MCF 10A (cell line): ENCODE measurements at regions of chr9 and their contacts with region 1.

Region 1: GRCh38 chr9:97598461-97599288 is 34.5 kb downstream of the TSTD2 start:
- DNase-seq: peak; percentile 80
- H3K4me3 Mint-ChIP-seq: no peak overlapping the region
- H3K27ac Mint-ChIP-seq: no peak overlapping the region
- H3K4me1 Mint-ChIP-seq: peaks cover 9% of the 10 kb centered on the region
- H3K27me3 Mint-ChIP-seq: no peaks in the 10 kb centered on the region
- CTCF ChIP-seq: peak; percentile 77

Region 2: DNA sequence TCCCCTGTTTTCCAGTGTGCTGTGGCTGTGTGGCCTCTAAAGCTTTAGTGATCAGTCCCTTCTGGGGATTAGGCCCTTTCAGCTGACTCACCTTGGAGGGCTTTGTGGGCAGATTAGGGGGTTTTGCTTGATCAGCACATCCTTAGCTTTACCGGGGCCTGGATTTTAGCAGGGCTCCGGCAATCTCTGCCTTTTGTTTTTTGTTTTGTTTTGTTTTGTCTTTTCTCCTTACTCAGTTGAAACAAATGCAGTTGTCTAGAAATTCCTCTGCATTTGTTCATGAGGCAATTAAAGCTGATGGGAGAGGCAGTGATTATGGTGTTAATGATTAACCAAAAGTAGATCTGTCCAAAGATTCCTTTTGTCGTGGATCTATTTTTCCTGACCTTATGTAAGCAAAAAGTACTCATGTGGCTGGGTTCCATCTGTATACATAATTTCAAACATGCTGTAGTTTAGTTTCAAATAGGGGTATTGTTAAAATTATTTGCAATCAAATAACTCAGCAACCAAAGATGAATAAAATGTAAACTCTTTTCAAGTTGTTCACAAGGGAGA is 192.0 kb before region 1 on chr9:
- CTCF ChIA-PET with region 1: interaction called, 11 read pairs
- POLR2A ChIA-PET with region 1: interaction called, 3 read pairs
- intact Hi-C with region 1: loop called (anchors 1 kb)
- DNase-seq: no peak
- H3K4me3 Mint-ChIP-seq: no peak overlapping the region
- H3K27ac Mint-ChIP-seq: no peak overlapping the region
- H3K4me1 Mint-ChIP-seq: peaks cover 4% of the 10 kb centered on the region
- H3K27me3 Mint-ChIP-seq: peaks cover 39% of the 10 kb centered on the region
- CTCF ChIP-seq: no peak

Region 3: DNA sequence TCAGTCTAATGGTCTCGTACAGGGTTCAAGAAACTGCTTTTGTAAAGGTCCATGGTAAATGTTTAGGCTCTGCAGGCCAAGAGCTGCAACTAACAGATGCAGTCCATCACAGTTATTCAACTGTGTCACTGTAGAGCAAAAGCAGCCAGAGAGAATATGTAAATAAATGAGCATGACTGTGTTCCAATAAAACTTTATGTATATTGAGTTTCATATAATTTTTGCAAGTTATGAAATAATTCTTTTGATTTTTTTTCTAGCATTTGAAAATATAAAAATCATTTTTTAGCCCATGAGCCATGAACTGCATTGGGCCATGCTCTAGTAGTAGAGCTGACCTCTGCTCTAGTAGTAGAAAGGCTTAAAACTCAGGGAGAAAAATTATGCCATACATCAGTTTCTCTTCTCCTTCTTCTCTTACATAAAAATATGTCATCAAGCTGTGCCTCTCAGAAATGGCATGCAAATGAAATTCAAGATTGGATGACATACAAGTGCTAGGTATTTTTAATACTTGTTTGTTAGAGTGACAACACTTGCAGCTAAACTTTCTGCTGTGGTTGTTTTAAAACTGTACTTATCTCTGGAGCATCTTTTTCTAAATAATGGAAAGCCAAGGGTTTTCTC is 139.5 kb before region 1 on chr9:
- CTCF ChIA-PET with region 1: interaction called, 18 read pairs
- POLR2A ChIA-PET with region 1: interaction called, 3 read pairs
- intact Hi-C with region 1: no loop called
- DNase-seq: no peak
- H3K4me3 Mint-ChIP-seq: no peak overlapping the region
- H3K27ac Mint-ChIP-seq: no peak overlapping the region
- H3K4me1 Mint-ChIP-seq: no peaks in the 10 kb centered on the region
- H3K27me3 Mint-ChIP-seq: no peaks in the 10 kb centered on the region
- CTCF ChIP-seq: no peak

Region 4: DNA sequence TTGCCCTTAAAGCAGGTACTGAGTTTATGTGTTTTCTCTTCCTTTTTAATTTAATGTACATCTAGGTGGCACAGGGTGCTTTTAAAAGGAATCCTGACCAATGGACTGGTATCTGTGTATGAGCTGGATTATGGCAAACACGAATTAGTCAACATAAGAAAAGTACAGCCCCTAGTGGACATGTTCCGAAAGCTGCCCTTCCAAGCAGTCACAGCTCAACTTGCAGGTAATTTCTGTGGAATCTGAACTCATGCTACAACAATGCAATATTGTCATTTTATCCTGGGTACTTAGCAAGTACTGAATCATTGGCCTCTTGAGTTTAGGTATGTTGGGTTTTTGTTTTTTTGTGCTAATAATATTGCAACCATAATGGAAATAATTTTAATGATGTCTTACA is 111.6 kb before region 1 on chr9:
- CTCF ChIA-PET with region 1: interaction called, 11 read pairs
- POLR2A ChIA-PET with region 1: interaction called, 3 read pairs
- intact Hi-C with region 1: no loop called
- DNase-seq: peak; percentile 25
- H3K4me3 Mint-ChIP-seq: no peak overlapping the region
- H3K27ac Mint-ChIP-seq: no peak overlapping the region
- H3K4me1 Mint-ChIP-seq: no peaks in the 10 kb centered on the region
- H3K27me3 Mint-ChIP-seq: no peaks in the 10 kb centered on the region
- CTCF ChIP-seq: peak; percentile 16

Region 5: GRCh38 chr9:97570899-97571298 is 27.8 kb before region 1 on chr9:
- CTCF ChIA-PET with region 1: interaction called, 26 read pairs
- POLR2A ChIA-PET with region 1: no interaction called
- intact Hi-C with region 1: no loop called
- DNase-seq: no peak
- H3K4me3 Mint-ChIP-seq: no peak overlapping the region
- H3K27ac Mint-ChIP-seq: no peak overlapping the region
- H3K4me1 Mint-ChIP-seq: no peaks in the 10 kb centered on the region
- H3K27me3 Mint-ChIP-seq: peaks cover 29% of the 10 kb centered on the region
- CTCF ChIP-seq: no peak

Region 6: GRCh38 chr9:97675655-97676054 is 77.0 kb after region 1 on chr9:
- CTCF ChIA-PET with region 1: no interaction called
- POLR2A ChIA-PET with region 1: no interaction called
- intact Hi-C with region 1: no loop called
- DNase-seq: no peak
- H3K4me3 Mint-ChIP-seq: no peak overlapping the region
- H3K27ac Mint-ChIP-seq: no peak overlapping the region
- H3K4me1 Mint-ChIP-seq: no peaks in the 10 kb centered on the region
- H3K27me3 Mint-ChIP-seq: no peaks in the 10 kb centered on the region
- CTCF ChIP-seq: no peak